ENCODE measurements at regions of chr12 and their contacts with region 1.

Region 1: GRCh38 chr12:92408072-92408900 is 262.6 kb upstream of the BTG1 start:
- DNase-seq: peak; percentile 77
- H3K4me3 Mint-ChIP-seq: no peak overlapping the region
- H3K27ac Mint-ChIP-seq: peak overlapping the region; percentile 33
- H3K4me1 Mint-ChIP-seq: peaks cover 48% of the 10 kb centered on the region
- H3K27me3 Mint-ChIP-seq: no peaks in the 10 kb centered on the region

Region 2: DNA sequence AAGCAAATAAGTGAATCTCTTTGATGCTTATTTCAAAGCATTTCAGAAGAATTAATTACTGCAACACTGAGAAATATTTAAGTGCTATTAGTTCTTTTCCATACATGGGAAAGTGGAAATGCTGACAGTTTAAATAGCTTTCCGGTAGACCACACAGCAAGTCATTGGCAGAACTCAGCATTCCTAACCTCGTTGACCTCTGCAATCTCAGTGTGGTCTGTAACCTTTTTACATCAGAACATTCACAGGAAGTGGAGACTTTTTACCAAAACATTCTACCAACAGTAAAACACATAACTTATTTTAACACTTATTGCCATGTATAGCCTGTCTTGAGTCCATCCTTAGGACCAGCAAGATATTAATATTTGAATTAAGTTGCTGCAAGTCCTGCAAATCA is 976.2 kb before region 1 on chr12:
- CTCF ChIA-PET with region 1: no interaction called
- POLR2A ChIA-PET with region 1: no interaction called
- intact Hi-C with region 1: no loop called
- DNase-seq: no peak
- H3K4me3 Mint-ChIP-seq: no peak overlapping the region
- H3K27ac Mint-ChIP-seq: no peak overlapping the region
- H3K4me1 Mint-ChIP-seq: no peaks in the 10 kb centered on the region
- H3K27me3 Mint-ChIP-seq: no peaks in the 10 kb centered on the region

Region 3: DNA sequence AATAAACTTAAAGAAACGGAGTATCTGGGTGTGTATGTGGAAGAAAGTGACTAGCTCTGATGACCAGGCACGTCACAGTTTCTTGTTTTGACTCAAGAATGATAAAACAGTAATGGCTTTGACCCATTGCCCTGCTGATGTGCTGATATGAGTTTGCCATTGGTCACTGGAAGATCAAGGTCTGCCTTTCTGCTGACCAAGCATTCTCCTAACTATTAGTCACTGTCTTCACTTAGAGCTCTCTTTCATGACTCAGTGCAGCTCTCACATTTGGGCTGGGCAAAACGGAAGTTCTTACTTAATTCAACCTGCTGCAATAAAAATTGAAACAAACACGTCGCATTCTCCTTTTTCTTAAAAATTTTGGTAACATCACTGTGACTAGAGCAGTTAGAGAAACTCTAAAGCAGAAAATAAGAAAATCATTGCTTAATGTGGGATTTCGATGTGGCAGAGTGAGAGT is 629.3 kb before region 1 on chr12:
- CTCF ChIA-PET with region 1: interaction called, 3 read pairs
- POLR2A ChIA-PET with region 1: interaction called, 3 read pairs
- intact Hi-C with region 1: loop called (anchors 10 kb)
- DNase-seq: peak; percentile 65
- H3K4me3 Mint-ChIP-seq: peak overlapping the region; percentile 48
- H3K27ac Mint-ChIP-seq: peak overlapping the region; percentile 75
- H3K4me1 Mint-ChIP-seq: peaks cover 27% of the 10 kb centered on the region
- H3K27me3 Mint-ChIP-seq: peaks cover 3% of the 10 kb centered on the region

Region 4: DNA sequence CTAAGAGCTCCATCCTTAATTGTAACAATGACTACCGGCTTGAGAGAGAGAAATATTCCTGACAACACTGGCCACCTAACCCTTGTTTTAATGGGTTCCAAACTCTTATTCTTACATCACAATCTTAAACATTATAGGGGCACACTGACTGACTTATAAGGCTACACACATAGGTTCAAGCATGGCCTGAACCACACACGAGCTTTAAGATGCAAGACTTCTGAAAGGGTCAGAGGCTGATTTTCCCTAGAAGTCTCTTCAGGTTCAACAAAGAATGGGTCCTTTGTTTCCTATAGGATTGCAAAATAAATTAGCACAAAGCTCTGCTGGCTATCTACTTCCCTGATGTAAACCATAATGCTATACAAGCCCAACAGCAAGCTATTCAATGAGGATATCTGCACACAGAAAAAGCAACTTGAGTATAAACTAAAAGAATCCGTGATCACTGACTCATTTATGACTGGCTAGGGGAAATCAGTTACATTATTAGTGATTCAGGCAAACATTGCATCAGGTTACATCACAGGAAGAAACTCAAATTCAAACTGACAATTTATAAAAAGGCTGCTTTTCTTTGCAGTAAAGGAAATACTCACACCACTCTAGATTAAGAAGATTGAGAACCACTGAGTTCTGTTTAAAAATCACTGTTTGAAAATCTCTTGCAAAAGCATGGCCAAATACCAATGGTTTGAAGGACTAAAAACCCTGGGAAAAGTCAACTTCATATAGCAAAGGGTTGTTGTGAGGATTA is 271.1 kb before region 1 on chr12:
- CTCF ChIA-PET with region 1: interaction called, 4 read pairs
- POLR2A ChIA-PET with region 1: interaction called, 10 read pairs
- intact Hi-C with region 1: loop called (anchors 2 kb)
- DNase-seq: no peak
- H3K4me3 Mint-ChIP-seq: peak overlapping the region; percentile 100
- H3K27ac Mint-ChIP-seq: peak overlapping the region; percentile 91
- H3K4me1 Mint-ChIP-seq: peaks cover 65% of the 10 kb centered on the region
- H3K27me3 Mint-ChIP-seq: no peaks in the 10 kb centered on the region

Region 5: GRCh38 chr12:92363295-92364146 is 44.8 kb before region 1 on chr12:
- CTCF ChIA-PET with region 1: interaction called, 8 read pairs
- POLR2A ChIA-PET with region 1: interaction called, 5 read pairs
- intact Hi-C with region 1: loop called (anchors 1 kb)
- DNase-seq: peak; percentile 55
- H3K4me3 Mint-ChIP-seq: peak overlapping the region; percentile 74
- H3K27ac Mint-ChIP-seq: peak overlapping the region; percentile 87
- H3K4me1 Mint-ChIP-seq: peaks cover 56% of the 10 kb centered on the region
- H3K27me3 Mint-ChIP-seq: no peaks in the 10 kb centered on the region

Region 6: DNA sequence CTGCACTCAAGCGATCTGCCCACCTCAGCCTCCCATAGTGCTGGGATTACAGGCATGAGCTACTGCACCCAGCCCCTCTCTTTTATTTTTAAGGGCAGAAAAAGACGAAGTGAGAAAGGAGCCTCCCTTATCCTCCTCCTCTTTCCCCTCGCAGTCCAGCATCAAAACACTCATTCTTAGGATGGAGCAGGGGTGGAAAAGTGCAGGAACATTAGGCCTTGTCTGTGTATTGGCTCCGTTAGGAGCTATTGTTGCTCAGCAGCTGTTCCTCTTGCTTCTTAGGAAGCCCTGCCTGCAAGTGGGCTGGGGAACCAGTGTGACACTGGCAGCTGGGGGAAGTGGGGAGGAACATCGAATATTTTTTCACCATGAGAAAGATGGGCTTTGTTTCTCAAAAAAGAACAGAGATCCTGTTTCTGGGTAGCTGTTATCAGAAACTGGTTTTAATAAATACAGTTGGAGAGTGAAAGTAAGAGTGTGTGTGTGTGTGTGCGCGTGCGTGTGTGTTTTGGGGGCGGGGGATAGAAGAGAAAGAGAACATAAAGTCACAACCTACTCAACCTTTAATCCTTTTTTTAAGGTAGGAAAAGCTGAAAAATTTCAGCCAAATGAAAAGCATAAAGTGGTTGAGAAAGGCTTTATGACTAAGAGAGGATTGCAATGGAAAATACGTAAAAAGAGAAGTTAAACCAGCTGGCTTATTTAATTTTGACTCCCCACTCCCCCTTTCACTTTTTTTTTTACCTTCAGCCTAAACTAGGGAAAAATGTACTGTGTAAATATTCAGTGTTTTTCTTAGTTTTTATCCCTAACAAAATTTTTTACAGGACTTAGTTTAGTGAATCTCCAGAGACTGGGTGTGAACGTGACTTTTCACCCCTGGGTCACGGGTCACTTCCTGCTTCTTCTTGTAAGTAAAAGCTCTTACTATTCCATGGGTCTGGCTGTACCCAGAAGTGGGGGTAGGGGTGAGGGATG is 97.3 kb after region 1 on chr12:
- CTCF ChIA-PET with region 1: interaction called, 16 read pairs
- POLR2A ChIA-PET with region 1: interaction called, 6 read pairs
- intact Hi-C with region 1: loop called (anchors 1 kb)
- DNase-seq: peak; percentile 75
- H3K4me3 Mint-ChIP-seq: peak overlapping the region; percentile 69
- H3K27ac Mint-ChIP-seq: peak overlapping the region; percentile 96
- H3K4me1 Mint-ChIP-seq: peaks cover 51% of the 10 kb centered on the region
- H3K27me3 Mint-ChIP-seq: no peaks in the 10 kb centered on the region

Region 7: DNA sequence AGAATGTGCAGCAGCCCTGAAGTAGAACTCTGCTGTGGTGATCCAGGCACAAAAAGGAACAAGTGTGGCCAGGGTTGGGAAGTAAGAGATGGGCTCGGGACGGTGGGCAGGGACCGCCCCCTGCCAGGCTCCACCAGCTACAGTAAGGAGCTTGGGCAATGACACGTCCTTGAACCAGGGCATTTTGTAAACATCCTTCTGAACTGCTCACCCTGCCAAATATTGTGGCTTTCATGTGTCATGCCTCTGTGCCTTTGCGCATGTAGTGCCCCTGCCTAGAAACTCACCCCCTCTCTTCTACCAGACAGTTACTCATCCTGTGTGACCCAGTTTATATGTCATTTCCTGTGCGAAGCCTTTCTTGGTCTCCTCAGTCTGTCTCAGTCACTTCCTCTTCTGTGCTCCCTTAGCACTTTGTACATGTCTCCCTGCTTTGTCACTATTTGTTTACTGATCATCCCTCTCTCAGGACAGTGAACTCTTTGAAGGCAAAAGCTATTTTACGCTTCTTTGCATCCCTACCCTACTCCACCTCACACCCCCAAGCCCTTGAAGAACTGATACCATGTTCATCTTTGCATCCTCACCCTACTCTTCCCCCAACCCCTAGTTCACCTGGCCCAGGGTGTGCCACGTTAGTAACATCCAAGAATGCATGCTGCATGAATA is 185.6 kb after region 1 on chr12:
- CTCF ChIA-PET with region 1: no interaction called
- POLR2A ChIA-PET with region 1: interaction called, 3 read pairs
- intact Hi-C with region 1: loop called (anchors 1 kb)
- DNase-seq: peak; percentile 87
- H3K4me3 Mint-ChIP-seq: peak overlapping the region; percentile 25
- H3K27ac Mint-ChIP-seq: peak overlapping the region; percentile 92
- H3K4me1 Mint-ChIP-seq: peaks cover 80% of the 10 kb centered on the region
- H3K27me3 Mint-ChIP-seq: no peaks in the 10 kb centered on the region

Measured in activated CD4-positive, alpha-beta memory T cell treated with anti-CD3 and anti-CD28 coated beads for 36 hours (primary cell).